HepG2 (cell line): ENCODE measurements at regions of chr22 and their contacts with region 1.

Region 1: DNA sequence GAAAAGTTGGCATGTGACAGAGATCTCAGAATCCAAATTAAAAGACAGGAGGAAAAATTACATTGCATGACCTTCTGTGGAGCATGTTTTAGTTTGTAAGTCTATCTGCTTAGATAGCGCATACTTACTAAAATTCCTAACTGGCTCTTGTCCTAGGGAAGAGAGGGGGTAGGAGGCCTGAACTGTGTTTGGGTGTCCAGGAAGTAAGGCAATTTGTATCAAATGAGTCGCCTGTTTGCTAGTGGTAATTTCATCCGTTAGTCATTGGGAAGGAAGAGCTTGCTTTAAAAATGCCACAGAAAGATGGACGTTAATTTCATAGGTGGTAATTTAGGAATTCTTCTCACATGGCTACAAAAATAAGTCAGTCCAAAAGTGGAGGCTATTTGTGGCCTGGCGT is 18.5 kb downstream of the GRK3 start:
- DNase-seq: peak; percentile 2
- ATAC-seq: no peak
- H3K4me3 ChIP-seq: no peak overlapping the region
- H3K27ac ChIP-seq: no peak overlapping the region
- H3K4me1 ChIP-seq: no peaks in the 10 kb centered on the region
- H3K27me3 ChIP-seq: no peaks in the 10 kb centered on the region
- CTCF ChIP-seq: no peak
- EP300 ChIP-seq: no peak
- POLR2A ChIP-seq: no peak
- RAD21 ChIP-seq: no peak

Region 2: GRCh38 chr22:25282671-25283561 is 300.0 kb before region 1 on chr22:
- CTCF ChIA-PET with region 1: no interaction called
- POLR2A ChIA-PET with region 1: no interaction called
- in situ Hi-C with region 1: loop called (anchors 5 kb)
- intact Hi-C with region 1: no loop called
- DNase-seq: no peak
- ATAC-seq: no peak
- H3K4me3 ChIP-seq: no peak overlapping the region
- H3K27ac ChIP-seq: no peak overlapping the region
- H3K4me1 ChIP-seq: no peaks in the 10 kb centered on the region
- H3K27me3 ChIP-seq: peaks cover 3 to 35% of the 10 kb centered on the region in 2 experiments; a peak in 4 of 5 replicates
- CTCF ChIP-seq: no peak
- EP300 ChIP-seq: no peak
- POLR2A ChIP-seq: no peak
- RAD21 ChIP-seq: no peak